Cardiac septum (tissue), 1 donor: ENCODE measurements at regions of chr4 and their contacts with region 1.

Region 1: GRCh38 chr4:153099391-153100140 is 104.7 kb upstream of the TRIM2 start:
- DNase-seq: no peak

Region 2: GRCh38 chr4:152500800-152501434 is 598.6 kb before region 1 on chr4:
- intact Hi-C with region 1: loop called (anchors 10 kb)
- DNase-seq: no peak